ENCODE measurements at regions of chr15 and their contacts with region 1.

Region 1: GRCh38 chr15:74897300-74897701 is 7.5 kb downstream of the MPI start:
- DNase-seq: no peak
- H3K4me3 ChIP-seq: no peak overlapping the region
- H3K4me3 Mint-ChIP-seq: no peak overlapping the region
- H3K27ac Mint-ChIP-seq: no peak overlapping the region
- H3K4me1 ChIP-seq: no peaks in the 10 kb centered on the region
- H3K4me1 Mint-ChIP-seq: no peaks in the 10 kb centered on the region
- H3K27me3 ChIP-seq: no peaks in the 10 kb centered on the region
- H3K27me3 Mint-ChIP-seq: no peaks in the 10 kb centered on the region
- CTCF ChIP-seq: no peak

Region 2: GRCh38 chr15:74680456-74680855 is 216.8 kb before region 1 on chr15:
- CTCF ChIA-PET with region 1: no interaction called
- POLR2A ChIA-PET with region 1: no interaction called
- intact Hi-C with region 1: loop called (anchors 5 kb)
- DNase-seq: no peak
- H3K4me3 ChIP-seq: no peak overlapping the region
- H3K4me3 Mint-ChIP-seq: no peak overlapping the region
- H3K27ac Mint-ChIP-seq: no peak overlapping the region
- H3K4me1 ChIP-seq: no peaks in the 10 kb centered on the region
- H3K4me1 Mint-ChIP-seq: no peaks in the 10 kb centered on the region
- H3K27me3 ChIP-seq: no peaks in the 10 kb centered on the region
- H3K27me3 Mint-ChIP-seq: no peaks in the 10 kb centered on the region
- CTCF ChIP-seq: no peak